ENCODE measurements at regions of chr7 and their contacts with region 1.

Region 1: DNA sequence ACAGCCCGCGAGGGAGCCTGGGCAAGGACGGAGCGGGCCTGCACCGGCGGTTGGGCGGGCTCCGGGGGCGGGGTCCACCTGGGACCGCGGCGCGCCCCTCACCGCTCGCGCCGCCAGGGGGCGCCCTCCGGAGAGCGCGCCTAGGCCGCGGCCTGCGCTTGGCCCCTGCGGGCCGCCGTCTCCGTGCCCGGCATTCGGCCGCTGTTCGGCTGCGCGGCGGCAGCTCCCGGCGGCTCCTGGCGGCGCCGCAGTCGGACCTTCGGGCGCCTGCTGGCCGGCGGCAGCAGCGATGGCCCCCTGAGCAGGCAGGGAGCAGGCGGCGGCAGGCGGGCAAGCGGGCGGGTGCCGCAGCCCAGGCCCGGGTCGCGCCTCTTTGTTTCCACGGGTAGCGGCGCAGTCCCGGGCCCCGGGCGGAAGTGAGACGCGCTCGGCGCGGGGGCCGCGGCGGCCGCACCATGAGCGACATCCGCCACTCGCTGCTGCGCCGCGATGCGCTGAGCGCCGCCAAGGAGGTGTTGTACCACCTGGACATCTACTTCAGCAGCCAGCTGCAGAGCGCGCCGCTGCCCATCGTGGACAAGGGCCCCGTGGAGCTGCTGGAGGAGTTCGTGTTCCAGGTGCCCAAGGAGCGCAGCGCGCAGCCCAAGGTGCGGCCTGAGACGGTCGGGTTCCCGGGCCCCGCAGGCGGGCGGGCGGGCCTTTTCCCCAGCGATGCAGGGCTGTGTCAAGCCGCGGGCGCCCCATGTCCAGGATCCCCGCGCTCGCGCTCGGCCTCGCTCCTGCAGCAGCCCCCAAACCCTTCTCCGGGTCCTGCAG is at the start of gene INTS15:
- H3K4me3 Mint-ChIP-seq: peak within 1 kb of the TSS; percentile 88
- H3K27ac Mint-ChIP-seq: peak within 1 kb of the TSS; percentile 83
- H3K4me1 Mint-ChIP-seq: peaks cover 17% of the 10 kb centered on the region
- H3K27me3 Mint-ChIP-seq: no peaks in the 10 kb centered on the region

Region 2: DNA sequence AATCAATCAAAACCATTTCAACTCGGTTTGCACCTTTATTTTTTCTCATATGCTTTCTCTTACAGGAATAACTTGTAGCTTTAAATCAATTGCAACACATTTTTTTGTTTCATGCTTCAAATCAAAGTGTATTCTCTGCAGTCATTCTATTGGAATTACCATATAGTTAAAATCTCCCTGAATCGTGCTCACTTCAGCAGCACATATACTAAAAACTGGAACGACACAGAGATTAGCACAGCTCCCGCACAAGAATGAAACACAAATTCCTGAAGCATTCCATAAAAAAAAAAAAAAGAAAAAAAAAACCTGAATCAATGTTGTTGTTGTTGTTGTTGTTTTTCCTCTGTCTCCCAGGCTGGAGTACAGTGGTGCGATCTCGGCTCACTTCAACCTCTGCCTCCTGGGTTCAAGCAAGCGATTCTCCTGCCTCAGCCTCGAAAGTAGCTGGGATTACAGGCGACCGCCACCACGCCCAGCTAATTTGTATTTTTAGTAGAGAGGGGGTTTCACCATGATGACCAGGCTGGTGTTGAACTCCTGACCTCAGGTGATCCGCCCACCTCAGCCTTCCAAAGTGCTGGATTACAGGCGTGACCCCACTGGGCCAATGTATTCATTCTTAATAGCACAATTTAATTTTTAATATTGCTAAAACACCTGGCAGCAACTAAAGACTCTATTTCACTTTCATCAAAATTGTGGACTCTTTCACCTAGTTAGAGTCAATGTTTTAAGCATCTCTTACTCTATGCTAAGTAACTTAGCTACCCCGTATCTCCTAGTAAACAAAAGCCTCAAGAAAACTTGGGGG is 532.5 kb before region 1 on chr7:
- intact Hi-C with region 1: no loop called
- H3K4me3 Mint-ChIP-seq: peak overlapping the region; percentile 97
- H3K27ac Mint-ChIP-seq: no peak overlapping the region
- H3K4me1 Mint-ChIP-seq: peaks cover 14% of the 10 kb centered on the region
- H3K27me3 Mint-ChIP-seq: no peaks in the 10 kb centered on the region

Region 3: GRCh38 chr7:6577365-6578113 is 12.5 kb before region 1 on chr7 and contains the start of gene ZDHHC4:
- intact Hi-C with region 1: loop called (anchors 1 kb)
- H3K4me3 Mint-ChIP-seq: peak within 1 kb of the TSS; percentile 88
- H3K27ac Mint-ChIP-seq: peak within 1 kb of the TSS; percentile 90
- H3K4me1 Mint-ChIP-seq: peaks cover 33% of the 10 kb centered on the region
- H3K27me3 Mint-ChIP-seq: peaks cover 8% of the 10 kb centered on the region

Region 4: GRCh38 chr7:6729492-6730342 is 139.7 kb after region 1 on chr7:
- intact Hi-C with region 1: loop called (anchors 5 kb)
- H3K4me3 Mint-ChIP-seq: peak overlapping the region; percentile 85
- H3K27ac Mint-ChIP-seq: peak overlapping the region; percentile 82
- H3K4me1 Mint-ChIP-seq: peaks cover 33% of the 10 kb centered on the region
- H3K27me3 Mint-ChIP-seq: peaks cover 7% of the 10 kb centered on the region